Left lung (tissue), 14 donors: ENCODE measurements at regions of chr11 and their contacts with region 1.

Region 1: DNA sequence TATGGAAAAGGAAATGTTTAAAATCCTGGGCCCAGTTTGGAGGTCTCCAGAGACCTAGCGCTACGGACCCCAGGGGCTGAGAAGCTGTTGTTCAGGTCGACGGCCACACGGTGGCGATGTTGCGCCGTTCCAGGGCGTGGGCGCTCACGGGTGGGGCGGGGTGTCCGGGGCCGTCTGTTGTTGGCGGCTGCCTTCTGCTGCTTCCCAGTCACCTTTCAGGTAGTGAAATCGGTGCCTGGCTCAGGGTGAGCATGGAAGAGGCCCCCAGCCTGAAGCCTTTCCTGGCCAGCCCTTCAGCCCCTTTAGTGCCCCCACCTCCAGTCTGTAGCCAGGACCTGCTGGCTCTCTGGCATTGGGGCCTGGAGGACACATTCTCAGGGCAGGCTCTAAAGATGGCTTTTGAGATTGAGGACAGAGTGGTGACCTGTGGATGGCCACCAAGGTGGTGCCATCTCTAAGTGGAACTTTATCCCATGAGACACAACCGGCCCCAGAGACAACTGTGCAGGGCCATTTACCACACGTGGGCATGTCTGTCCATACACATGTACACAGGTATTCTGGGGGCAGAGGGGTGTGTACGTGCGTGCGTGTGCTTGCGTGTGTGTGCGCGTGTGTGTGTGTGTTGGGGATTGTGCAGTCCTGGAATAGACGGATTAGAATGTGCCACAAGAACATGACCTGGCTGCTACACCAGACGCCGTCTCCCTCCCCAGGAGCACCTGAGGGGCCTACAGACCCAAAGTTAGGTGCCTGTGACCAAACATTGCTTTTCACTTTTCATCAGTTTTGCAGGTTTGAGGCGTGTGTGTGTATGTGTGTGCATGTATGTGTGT is 53.8 kb downstream of the ST14 start:
- DNase-seq: peak; percentile 45 to 95 (median 68)
- ATAC-seq: peak; percentile 95
- H3K4me3 ChIP-seq: no peak overlapping the region
- H3K27ac ChIP-seq: no peak overlapping the region
- H3K4me1 ChIP-seq: peaks cover 0 to 9% of the 10 kb centered on the region in 2 donors
- H3K27me3 ChIP-seq: no peaks in the 10 kb centered on the region
- CTCF ChIP-seq: peak; percentile 87 to 95

Region 2: DNA sequence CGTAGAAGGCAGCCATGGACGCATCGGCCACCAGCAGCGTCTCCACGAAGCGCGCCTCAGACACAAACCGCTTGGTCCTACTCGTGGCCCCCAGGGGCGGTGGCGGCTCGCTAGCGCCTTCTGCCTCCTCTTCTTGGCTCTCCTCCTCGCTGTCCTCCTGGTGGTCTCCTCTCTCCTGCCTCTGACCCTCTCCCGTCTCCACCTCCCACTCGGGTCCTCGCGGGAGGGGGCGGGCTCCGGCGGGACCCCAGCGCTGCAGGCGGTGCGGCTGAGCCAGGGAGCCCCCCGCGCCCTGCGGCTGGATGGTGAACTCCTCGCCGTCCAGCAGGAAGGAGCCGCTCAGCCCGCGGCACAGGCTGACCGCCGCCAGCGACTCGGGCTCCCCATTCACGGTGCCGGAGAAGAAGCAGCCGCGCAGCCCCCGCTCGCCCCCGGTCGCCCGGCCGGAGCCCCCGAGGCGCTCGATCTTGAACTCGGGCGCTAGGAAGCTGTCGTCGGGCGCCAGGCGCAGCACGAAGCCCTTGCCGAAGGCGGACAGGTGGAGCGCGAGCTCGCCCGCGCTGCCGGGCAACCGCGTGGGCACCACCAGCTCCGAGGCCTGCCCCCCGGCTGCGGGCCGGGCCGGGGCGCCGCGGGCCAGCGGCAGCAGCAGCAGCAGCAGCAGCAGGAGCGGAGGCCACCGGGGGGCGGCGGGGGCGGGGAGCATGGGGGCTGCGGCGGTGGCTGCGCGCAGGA is 214.4 kb after region 1 on chr11:
- intact Hi-C with region 1: loop called in 1 of 2 experiments (anchors 10 kb)
- DNase-seq: no peak
- ATAC-seq: no peak
- H3K4me3 ChIP-seq: peak overlapping the region; percentile 17 to 37
- H3K27ac ChIP-seq: peak overlapping the region in 1 of 2 donors; percentile 61
- H3K4me1 ChIP-seq: peaks cover 3 to 14% of the 10 kb centered on the region in 2 donors
- H3K27me3 ChIP-seq: peaks cover 37 to 97% of the 10 kb centered on the region in 2 donors
- CTCF ChIP-seq: no peak

Region 3: GRCh38 chr11:130861902-130862860 is 648.8 kb after region 1 on chr11:
- intact Hi-C with region 1: loop called in 1 of 2 experiments (anchors 10 kb)
- DNase-seq: peak; percentile 90 to 96 (median 94)
- ATAC-seq: peak; percentile 98
- H3K4me3 ChIP-seq: no peak overlapping the region
- H3K27ac ChIP-seq: no peak overlapping the region
- H3K4me1 ChIP-seq: no peaks in the 10 kb centered on the region
- H3K27me3 ChIP-seq: no peaks in the 10 kb centered on the region
- CTCF ChIP-seq: peak; percentile 99